Activated CD8-positive, alpha-beta memory T cell treated with anti-CD3 and anti-CD28 coated beads, Interleukin-2, amount 10 ng/mL, durations not matched to agents 7 days and 5 days (primary cell): ENCODE measurements at regions of chr2 and their contacts with region 1.

Region 1: GRCh38 chr2:25314514-25315315 is 27.0 kb downstream of the DNMT3A start:
- DNase-seq: peak; percentile 93
- ATAC-seq: peak; percentile 92
- H3K4me3 Mint-ChIP-seq: peak overlapping the region; percentile 76
- H3K27ac Mint-ChIP-seq: peak overlapping the region; percentile 92
- H3K4me1 Mint-ChIP-seq: peaks cover 60% of the 10 kb centered on the region
- H3K27me3 Mint-ChIP-seq: no peaks in the 10 kb centered on the region

Region 2: DNA sequence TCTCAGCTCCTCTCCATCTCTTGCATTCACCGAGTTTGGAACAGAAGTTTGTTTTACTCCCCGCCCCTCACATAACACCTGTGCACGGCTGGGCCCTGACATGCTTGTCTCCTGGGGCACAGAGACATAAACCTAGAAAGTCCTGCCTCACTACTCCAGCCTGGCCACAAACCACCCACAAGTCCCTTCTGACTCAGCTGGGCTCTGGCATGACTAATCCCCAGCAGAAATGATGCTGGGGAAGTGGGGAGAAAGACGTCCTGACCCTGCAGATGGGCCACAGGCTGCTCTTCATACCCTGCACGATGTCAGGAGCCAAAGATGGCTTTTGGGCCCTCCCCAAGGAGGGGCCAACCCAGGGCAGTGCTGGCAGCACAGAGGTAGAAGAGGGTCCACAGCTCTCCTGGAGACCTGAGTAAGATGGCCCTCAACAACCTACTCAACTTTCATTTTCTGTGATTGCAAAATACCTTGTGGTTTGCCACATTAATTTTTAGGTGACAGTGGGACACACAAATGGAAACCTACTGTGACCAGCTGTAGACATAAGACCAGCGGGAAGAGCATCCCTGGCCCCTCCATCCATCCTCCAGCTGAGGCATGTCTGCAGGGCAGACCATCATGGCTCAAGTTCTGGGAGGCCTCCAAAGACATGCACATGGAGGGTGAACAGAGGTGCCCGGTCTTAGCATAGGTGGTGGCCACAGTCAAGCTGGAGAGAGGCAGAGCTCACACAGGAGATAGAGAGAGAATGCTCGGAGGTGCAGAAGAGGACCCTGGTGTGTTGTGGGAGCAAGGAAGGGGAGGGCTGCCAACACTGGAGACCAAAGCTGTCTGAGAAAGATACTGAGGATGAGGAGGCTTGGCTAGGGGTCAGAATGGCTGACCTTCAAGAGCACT is 13.0 kb before region 1 on chr2:
- CTCF ChIA-PET with region 1: interaction called, 29 read pairs
- DNase-seq: peak; percentile 96
- ATAC-seq: peak; percentile 95
- H3K4me3 Mint-ChIP-seq: peak overlapping the region; percentile 10
- H3K27ac Mint-ChIP-seq: peak overlapping the region; percentile 70
- H3K4me1 Mint-ChIP-seq: peaks cover 63% of the 10 kb centered on the region
- H3K27me3 Mint-ChIP-seq: no peaks in the 10 kb centered on the region